ENCODE measurements at regions of chr14 and their contacts with region 1.

Region 1: DNA sequence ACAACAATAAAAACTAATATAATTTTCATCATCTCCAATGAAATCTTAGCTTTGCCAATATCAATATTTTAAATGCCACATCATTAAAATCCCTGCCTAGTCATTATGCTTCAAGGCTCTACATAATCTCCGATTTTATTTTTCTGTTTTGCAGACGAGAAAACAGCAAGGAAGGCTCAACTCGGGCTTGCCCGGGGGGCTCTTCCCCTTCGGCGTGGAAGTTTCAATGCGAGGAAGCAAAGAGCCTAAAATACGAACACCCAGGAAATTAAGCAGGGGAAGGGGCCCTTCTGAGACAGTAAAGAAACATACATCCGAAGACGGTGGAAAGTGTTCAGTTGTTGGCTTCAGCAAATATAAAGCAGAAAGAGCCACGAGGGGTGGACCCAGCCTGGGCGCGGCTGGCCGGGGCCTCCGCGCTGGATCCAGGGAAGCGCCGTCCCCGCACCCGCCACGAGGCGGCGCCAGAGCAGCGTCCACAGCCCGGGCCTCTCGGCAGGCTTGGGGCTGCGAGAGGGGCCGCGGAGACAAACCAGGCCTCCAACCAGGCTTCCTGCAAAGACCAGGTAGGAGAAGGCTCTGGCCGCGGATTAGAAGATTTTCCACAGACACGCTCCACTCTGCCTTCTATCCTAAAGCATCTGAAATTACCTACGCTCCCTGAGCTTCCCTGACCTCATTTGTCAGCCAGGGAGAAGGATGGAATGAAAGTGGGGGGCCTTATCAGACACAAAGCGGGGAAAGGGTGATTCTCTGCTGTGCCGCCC is 77.2 kb downstream of the SERPINA3 start:
- DNase-seq: peak; percentile 54 to 78 (median 70)
- ATAC-seq: peak; percentile 99
- H3K4me3 ChIP-seq: no peak overlapping the region
- H3K27ac ChIP-seq: no peak overlapping the region
- H3K4me1 ChIP-seq: no peaks in the 10 kb centered on the region
- H3K27me3 ChIP-seq: peaks cover 0 to 32% of the 10 kb centered on the region in 2 experiments; a peak in 3 of 5 replicates
- CTCF ChIP-seq: peak; percentile 66 to 81 (median 76)
- EP300 ChIP-seq: no peak
- POLR2A ChIP-seq: no peak
- RAD21 ChIP-seq: peak; percentile 56 to 79

Region 2: DNA sequence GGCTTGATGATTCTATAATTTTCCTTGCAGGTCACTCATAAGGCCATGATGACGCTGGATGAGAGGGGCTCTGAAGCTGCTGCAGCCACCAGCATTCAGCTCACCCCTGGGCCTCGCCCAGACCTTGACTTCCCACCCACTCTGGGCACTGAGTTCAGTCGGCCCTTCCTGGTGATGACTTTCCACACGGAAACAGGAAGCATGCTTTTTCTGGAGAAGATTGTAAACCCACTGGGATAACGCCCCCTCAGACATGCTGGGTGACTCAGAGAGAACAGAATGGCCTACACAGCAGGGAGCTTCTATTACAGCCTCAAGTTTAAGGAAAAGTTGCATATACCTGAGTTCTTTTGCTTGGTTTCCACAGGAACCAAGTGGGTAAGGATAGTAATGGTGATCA is 42.9 kb before region 1 on chr14:
- CTCF ChIA-PET with region 1: no interaction called
- POLR2A ChIA-PET with region 1: no interaction called
- in situ Hi-C with region 1: no loop called
- intact Hi-C with region 1: no loop called
- DNase-seq: no peak
- ATAC-seq: no peak
- H3K4me3 ChIP-seq: no peak overlapping the region
- H3K27ac ChIP-seq: no peak overlapping the region
- H3K4me1 ChIP-seq: no peaks in the 10 kb centered on the region
- H3K27me3 ChIP-seq: no peaks in the 10 kb centered on the region
- CTCF ChIP-seq: no peak
- EP300 ChIP-seq: no peak
- POLR2A ChIP-seq: no peak
- RAD21 ChIP-seq: no peak

Region 3: GRCh38 chr14:94748667-94749347 is 59.4 kb after region 1 on chr14:
- CTCF ChIA-PET with region 1: no interaction called
- POLR2A ChIA-PET with region 1: no interaction called
- in situ Hi-C with region 1: no loop called
- intact Hi-C with region 1: loop called (anchors 5 kb)
- DNase-seq: peak in 2 of 4 experiments; percentile 16
- ATAC-seq: peak; percentile 78
- H3K4me3 ChIP-seq: no peak overlapping the region
- H3K27ac ChIP-seq: no peak overlapping the region
- H3K4me1 ChIP-seq: no peaks in the 10 kb centered on the region
- H3K27me3 ChIP-seq: no peaks in the 10 kb centered on the region; a peak in 1 of 5 replicates
- CTCF ChIP-seq: peak; percentile 56 to 69 (median 57); a peak in 5 of 6 replicates
- EP300 ChIP-seq: no peak
- POLR2A ChIP-seq: no peak
- RAD21 ChIP-seq: peak in 1 of 2 experiments; percentile 47; a peak in 1 of 4 replicates

Region 4: GRCh38 chr14:95098984-95099599 is 409.7 kb after region 1 on chr14:
- CTCF ChIA-PET with region 1: no interaction called
- POLR2A ChIA-PET with region 1: no interaction called
- in situ Hi-C with region 1: no loop called
- intact Hi-C with region 1: loop called (anchors 5 kb)
- DNase-seq: peak; percentile 14 to 66 (median 23)
- ATAC-seq: peak; percentile 94
- H3K4me3 ChIP-seq: no peak overlapping the region
- H3K27ac ChIP-seq: no peak overlapping the region
- H3K4me1 ChIP-seq: no peaks in the 10 kb centered on the region
- H3K27me3 ChIP-seq: no peaks in the 10 kb centered on the region
- CTCF ChIP-seq: peak; percentile 63 to 78 (median 63)
- EP300 ChIP-seq: no peak
- POLR2A ChIP-seq: no peak
- RAD21 ChIP-seq: peak; percentile 41 to 55

Region 5: GRCh38 chr14:95196290-95196689 is 506.9 kb after region 1 on chr14:
- CTCF ChIA-PET with region 1: interaction called, 4 read pairs
- POLR2A ChIA-PET with region 1: no interaction called
- in situ Hi-C with region 1: no loop called
- intact Hi-C with region 1: loop called (anchors 1 kb)
- DNase-seq: peak; percentile 31 to 48 (median 36)
- ATAC-seq: peak; percentile 88
- H3K4me3 ChIP-seq: no peak overlapping the region
- H3K27ac ChIP-seq: no peak overlapping the region
- H3K4me1 ChIP-seq: no peaks in the 10 kb centered on the region
- H3K27me3 ChIP-seq: peaks cover 3 to 21% of the 10 kb centered on the region in 2 experiments; a peak in 3 of 5 replicates
- CTCF ChIP-seq: peak; percentile 39 to 58 (median 40); a peak in 4 of 6 replicates
- EP300 ChIP-seq: no peak
- POLR2A ChIP-seq: no peak
- RAD21 ChIP-seq: peak; percentile 52 to 73

Region 6: DNA sequence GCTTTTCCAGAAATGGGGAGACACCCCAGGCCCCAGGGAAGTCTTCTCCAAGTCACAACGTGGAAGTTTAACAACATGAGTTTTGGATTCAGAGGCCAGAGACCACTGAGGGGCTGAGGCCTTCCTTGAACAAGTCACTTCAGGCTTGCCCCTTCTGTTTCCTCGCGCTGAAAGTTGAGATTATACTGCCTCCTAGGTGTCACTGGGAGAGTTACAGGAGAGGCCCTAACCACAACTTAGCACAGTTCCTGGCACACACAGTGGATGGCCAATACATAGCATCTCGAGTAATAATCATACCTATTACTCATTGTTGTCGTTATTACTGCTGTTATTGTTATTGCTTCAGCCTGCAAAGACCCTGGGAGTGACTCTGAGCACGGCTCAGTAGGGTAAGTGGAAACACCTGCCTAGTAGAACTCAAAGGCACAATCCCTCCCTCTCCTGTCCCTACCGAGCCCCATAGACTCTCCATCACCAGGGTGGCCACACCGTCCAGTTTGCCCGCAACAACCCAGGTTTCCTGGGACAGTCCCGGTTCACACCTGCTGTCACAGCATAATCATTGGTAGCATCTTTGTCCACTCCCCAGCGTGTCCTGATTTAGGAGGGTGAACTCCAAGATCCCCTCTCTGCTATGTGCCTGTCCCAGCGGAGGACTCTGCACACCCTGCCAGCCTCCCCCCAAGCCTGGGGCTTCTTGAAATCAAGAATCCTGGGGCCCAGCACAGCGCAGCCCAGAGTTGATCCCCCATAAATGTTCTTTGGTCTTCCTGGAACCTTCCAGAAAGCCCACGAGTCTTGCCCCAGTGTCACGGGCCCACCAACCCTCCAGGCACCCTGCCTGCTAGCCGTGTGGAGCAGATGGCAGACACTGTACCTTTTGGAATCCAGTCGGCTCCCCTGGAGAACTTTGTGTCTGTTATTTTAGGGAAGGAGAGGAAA is 742.1 kb after region 1 on chr14:
- CTCF ChIA-PET with region 1: interaction called, 4 read pairs
- POLR2A ChIA-PET with region 1: no interaction called
- in situ Hi-C with region 1: no loop called
- intact Hi-C with region 1: loop called (anchors 2 kb)
- DNase-seq: peak; percentile 28 to 44 (median 38)
- ATAC-seq: peak; percentile 90
- H3K4me3 ChIP-seq: no peak overlapping the region
- H3K27ac ChIP-seq: no peak overlapping the region
- H3K4me1 ChIP-seq: no peaks in the 10 kb centered on the region; a peak in 1 of 5 replicates
- H3K27me3 ChIP-seq: peaks cover 0 to 4% of the 10 kb centered on the region in 2 experiments; a peak in 2 of 5 replicates
- CTCF ChIP-seq: peak; percentile 52 to 66 (median 66)
- EP300 ChIP-seq: no peak
- POLR2A ChIP-seq: no peak
- RAD21 ChIP-seq: peak in 1 of 2 experiments; percentile 49; a peak in 2 of 4 replicates

Measured in K562 (cell line).